ENCODE measurements at regions of chr1 and their contacts with region 1.

Region 1: GRCh38 chr1:92411511-92411910 is 75.2 kb downstream of the GFI1 start:
- DNase-seq: no peak
- ATAC-seq: peak in 2 of 4 experiments; percentile 35 to 59
- H3K4me3 ChIP-seq: no peak overlapping the region
- H3K4me3 Mint-ChIP-seq: peak overlapping the region in 1 of 3 donors; percentile 46
- H3K27ac ChIP-seq: no peak overlapping the region
- H3K27ac Mint-ChIP-seq: peak overlapping the region in 1 of 2 donors; percentile 77
- H3K4me1 ChIP-seq: peaks cover 27 to 30% of the 10 kb centered on the region in 2 experiments
- H3K4me1 Mint-ChIP-seq: peaks cover 35 to 55% (median 39%) of the 10 kb centered on the region in 3 donors
- H3K27me3 ChIP-seq: no peaks in the 10 kb centered on the region
- H3K27me3 Mint-ChIP-seq: no peaks in the 10 kb centered on the region

Region 2: GRCh38 chr1:94385308-94385929 is 1973.9 kb after region 1 on chr1:
- CTCF ChIA-PET with region 1: no interaction called
- POLR2A ChIA-PET with region 1: interaction called in 1 of 2 experiments, 10 read pairs
- DNase-seq: no peak
- ATAC-seq: peak in 2 of 4 experiments; percentile 15 to 19
- H3K4me3 ChIP-seq: no peak overlapping the region
- H3K4me3 Mint-ChIP-seq: peak overlapping the region in 2 of 3 donors; percentile 53 to 56
- H3K27ac ChIP-seq: no peak overlapping the region
- H3K27ac Mint-ChIP-seq: peak overlapping the region; percentile 58 to 92
- H3K4me1 ChIP-seq: peaks cover 7 to 29% of the 10 kb centered on the region in 2 experiments
- H3K4me1 Mint-ChIP-seq: peaks cover 21 to 26% (median 22%) of the 10 kb centered on the region in 3 donors
- H3K27me3 ChIP-seq: no peaks in the 10 kb centered on the region
- H3K27me3 Mint-ChIP-seq: no peaks in the 10 kb centered on the region